PC-3 (cell line): ENCODE measurements at regions of chr17 and their contacts with region 1.

Region 1: GRCh38 chr17:5780476-5780875 is 196.2 kb upstream of the NLRP1 start:
- DNase-seq: peak; percentile 80
- ATAC-seq: 0 out of 2 replicates have a peak, but pooled peaks have one; percentile 23
- H3K4me3 ChIP-seq: no peak overlapping the region
- H3K27ac ChIP-seq: peak overlapping the region; percentile 51
- H3K4me1 ChIP-seq: peaks cover 52% of the 10 kb centered on the region
- H3K27me3 ChIP-seq: no peaks in the 10 kb centered on the region
- CTCF ChIP-seq: peak; percentile 53

Region 2: GRCh38 chr17:5592382-5592781 is 188.1 kb before region 1 on chr17:
- CTCF ChIA-PET with region 1: no interaction called
- POLR2A ChIA-PET with region 1: no interaction called
- intact Hi-C with region 1: loop called (anchors 2 kb)
- DNase-seq: peak; percentile 79
- ATAC-seq: 0 out of 2 replicates have a peak, but pooled peaks have one; percentile 35
- H3K4me3 ChIP-seq: no peak overlapping the region
- H3K27ac ChIP-seq: no peak overlapping the region
- H3K4me1 ChIP-seq: 0 out of 2 replicates have a peak, but pooled peaks cover under 1% of the 10 kb centered on the region
- H3K27me3 ChIP-seq: no peaks in the 10 kb centered on the region
- CTCF ChIP-seq: peak; percentile 70

Region 3: GRCh38 chr17:5702951-5703510 is 77.4 kb before region 1 on chr17:
- CTCF ChIA-PET with region 1: no interaction called
- POLR2A ChIA-PET with region 1: no interaction called
- intact Hi-C with region 1: no loop called
- DNase-seq: no peak
- ATAC-seq: no peak
- H3K4me3 ChIP-seq: no peak overlapping the region
- H3K27ac ChIP-seq: no peak overlapping the region
- H3K4me1 ChIP-seq: no peaks in the 10 kb centered on the region
- H3K27me3 ChIP-seq: no peaks in the 10 kb centered on the region
- CTCF ChIP-seq: no peak

Region 4: GRCh38 chr17:5888811-5889210 is 108.3 kb after region 1 on chr17:
- CTCF ChIA-PET with region 1: no interaction called
- POLR2A ChIA-PET with region 1: interaction called, 5 read pairs
- intact Hi-C with region 1: loop called (anchors 1 kb)
- DNase-seq: peak; percentile 66
- ATAC-seq: no peak
- H3K4me3 ChIP-seq: no peak overlapping the region
- H3K27ac ChIP-seq: peak overlapping the region; percentile 91
- H3K4me1 ChIP-seq: peaks cover 20% of the 10 kb centered on the region
- H3K27me3 ChIP-seq: no peaks in the 10 kb centered on the region
- CTCF ChIP-seq: no peak